ENCODE measurements at regions of chr12 and their contacts with region 1.

Region 1: DNA sequence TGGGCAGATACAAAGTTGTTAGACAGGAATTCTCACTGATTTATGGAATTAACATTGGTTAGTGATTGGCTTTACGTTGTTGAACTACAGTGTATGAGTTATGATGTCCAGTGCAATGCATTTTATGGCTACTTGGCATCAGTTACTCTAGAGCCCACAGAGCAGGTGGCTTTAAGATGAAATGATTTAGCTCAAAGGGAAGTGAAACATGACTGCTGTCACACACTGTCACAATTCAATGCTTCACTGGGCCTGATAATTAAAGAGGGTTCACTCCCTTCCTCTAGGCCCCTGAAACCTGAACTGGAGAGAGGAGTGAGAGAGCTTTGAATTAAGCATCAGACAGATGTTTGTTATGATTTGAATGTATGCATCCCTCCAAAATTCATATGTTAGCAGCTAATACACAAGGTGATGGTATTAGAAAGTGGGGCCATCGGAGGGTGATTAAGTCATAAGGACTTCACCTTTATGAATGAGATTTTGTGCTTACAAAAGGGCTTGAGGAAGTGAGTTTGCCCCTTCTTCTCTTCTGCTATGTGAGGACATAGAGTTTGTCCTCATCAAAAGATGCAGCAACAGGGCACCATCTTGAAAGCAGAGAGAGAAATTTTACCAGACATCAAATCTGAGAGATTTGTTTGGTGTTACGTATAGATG is 175.8 kb upstream of the GRIN2B start:
- DNase-seq: no peak
- ATAC-seq: no peak
- H3K4me3 ChIP-seq: no peak overlapping the region
- H3K4me3 Mint-ChIP-seq: no peak overlapping the region
- H3K27ac ChIP-seq: no peak overlapping the region
- H3K27ac Mint-ChIP-seq: no peak overlapping the region
- H3K4me1 ChIP-seq: no peaks in the 10 kb centered on the region
- H3K4me1 Mint-ChIP-seq: peaks cover 0 to 4% (median 0%) of the 10 kb centered on the region in 3 donors
- H3K27me3 ChIP-seq: peaks cover 0 to 8% of the 10 kb centered on the region in 2 experiments
- H3K27me3 Mint-ChIP-seq: peaks cover 0 to 8% of the 10 kb centered on the region in 2 donors

Region 2: GRCh38 chr12:13278249-13278787 is 878.9 kb before region 1 on chr12:
- CTCF ChIA-PET with region 1: interaction called in 1 of 2 experiments, 14 read pairs
- POLR2A ChIA-PET with region 1: no interaction called
- DNase-seq: peak in 34 of 35 experiments; percentile 9 to 74 (median 41)
- ATAC-seq: peak; percentile 78 to 86 (median 80)
- H3K4me3 ChIP-seq: peak overlapping the region in 1 of 2 donors; percentile 19
- H3K4me3 Mint-ChIP-seq: peak overlapping the region in 1 of 3 donors; percentile 26
- H3K27ac ChIP-seq: no peak overlapping the region
- H3K27ac Mint-ChIP-seq: no peak overlapping the region
- H3K4me1 ChIP-seq: peaks cover 0 to 7% of the 10 kb centered on the region in 2 experiments
- H3K4me1 Mint-ChIP-seq: peaks cover 4 to 6% (median 5%) of the 10 kb centered on the region in 3 donors
- H3K27me3 ChIP-seq: peaks cover 14 to 42% of the 10 kb centered on the region in 2 experiments
- H3K27me3 Mint-ChIP-seq: peaks cover 29 to 43% of the 10 kb centered on the region in 2 donors